AG04449 (cell line): ENCODE measurements at regions of chr11 and their contacts with region 1.

Region 1: GRCh38 chr11:64317957-64318693 is at the start of gene PRDX5:
- DNase-seq: peak; percentile 59
- H3K4me3 ChIP-seq: peak within 1 kb of the TSS; percentile 96
- CTCF ChIP-seq: peak; percentile 50

Region 2: GRCh38 chr11:64331557-64332371 is 13.6 kb after region 1 on chr11:
- CTCF ChIA-PET with region 1: interaction called, 25 read pairs
- POLR2A ChIA-PET with region 1: interaction called, 14 read pairs
- DNase-seq: peak; percentile 21
- H3K4me3 ChIP-seq: no peak overlapping the region
- CTCF ChIP-seq: peak; percentile 77

Region 3: DNA sequence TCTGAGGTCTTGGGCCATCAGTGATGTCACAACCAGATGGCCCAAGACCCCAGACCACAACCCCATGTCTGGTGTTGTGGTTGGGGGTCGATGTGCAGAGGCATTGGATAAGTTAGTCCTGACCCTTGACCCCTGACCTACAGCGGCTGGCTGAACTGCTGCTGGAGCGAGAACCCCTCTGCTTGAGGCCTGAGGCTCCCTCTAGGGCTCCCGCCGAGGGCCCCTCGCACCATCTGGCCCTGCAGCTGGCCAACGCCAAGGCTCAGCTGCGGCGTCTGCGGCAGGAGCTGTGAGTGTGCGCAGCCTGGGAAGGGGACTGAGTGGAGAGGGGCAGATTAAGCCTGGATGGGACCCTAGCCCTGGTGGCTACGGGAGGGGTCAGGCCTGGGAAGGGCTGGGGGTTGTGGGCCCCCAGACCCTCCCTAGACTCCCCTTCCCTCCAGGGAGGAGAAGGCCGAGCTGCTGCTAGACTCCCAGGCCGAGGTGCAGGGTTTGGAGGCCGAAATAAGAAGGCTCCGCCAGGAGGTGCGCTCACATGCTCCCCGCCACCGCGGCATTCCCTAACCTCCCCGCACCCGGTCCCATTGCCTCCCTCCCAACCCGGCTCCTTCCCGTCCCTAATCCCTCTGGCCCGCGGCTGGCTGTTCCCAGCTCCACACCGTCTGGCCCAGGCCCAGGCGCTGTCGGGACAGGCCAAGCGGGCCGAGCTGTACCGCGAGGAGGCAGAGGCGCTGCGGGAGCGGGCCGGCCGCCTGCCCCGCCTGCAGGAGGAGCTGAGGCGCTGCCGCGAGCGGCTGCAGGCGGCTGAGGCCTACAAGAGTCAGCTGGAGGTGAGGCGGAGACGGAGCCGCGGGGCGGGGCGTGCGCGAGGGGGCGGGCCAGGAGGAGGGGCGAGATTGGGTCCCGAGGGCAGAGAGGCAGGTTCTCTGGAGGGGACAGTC is 24.0 kb after region 1 on chr11:
- CTCF ChIA-PET with region 1: interaction called, 14 read pairs
- POLR2A ChIA-PET with region 1: interaction called, 3 read pairs
- DNase-seq: peak; percentile 28
- H3K4me3 ChIP-seq: peak overlapping the region; percentile 55
- CTCF ChIP-seq: peak; percentile 67